Right lobe of liver (tissue), 6 donors: ENCODE measurements at regions of chr15 and their contacts with region 1.

Region 1: GRCh38 chr15:39874890-39875549 is 45.0 kb downstream of the GPR176 start:
- DNase-seq: no peak
- ATAC-seq: peak; percentile 88 to 93 (median 92)
- H3K4me3 ChIP-seq: no peak overlapping the region
- H3K27ac ChIP-seq: no peak overlapping the region
- H3K4me1 ChIP-seq: peaks cover 0 to 10% (median 0%) of the 10 kb centered on the region in 4 donors
- H3K27me3 ChIP-seq: no peaks in the 10 kb centered on the region
- CTCF ChIP-seq: peak; percentile 65 to 80 (median 78)
- POLR2A ChIP-seq: no peak

Region 2: DNA sequence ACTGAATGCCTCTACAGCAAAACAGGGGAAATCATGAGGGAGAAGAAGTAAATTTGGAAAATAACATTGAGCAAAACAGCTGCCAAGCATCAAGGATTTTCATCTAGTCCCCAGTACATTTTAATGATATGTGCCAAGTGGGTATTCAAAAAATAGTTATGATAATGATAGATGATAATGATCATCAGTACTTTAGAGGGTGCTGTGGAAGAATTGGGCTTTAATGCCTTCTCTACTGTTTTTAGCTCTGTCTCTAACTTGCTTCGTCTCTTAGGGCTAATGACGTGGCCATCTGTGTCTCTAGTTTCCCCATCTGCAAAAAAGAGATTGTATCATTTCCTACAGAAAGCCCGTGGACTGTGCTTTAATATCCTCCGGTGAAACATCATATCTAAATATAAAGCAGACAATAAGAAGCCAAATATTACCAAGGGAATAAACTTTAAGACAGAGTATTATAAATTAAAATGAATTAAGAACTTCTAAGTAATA is 82.1 kb before region 1 on chr15:
- intact Hi-C with region 1: loop called (anchors 5 to 10 kb)
- DNase-seq: no peak
- ATAC-seq: no peak
- H3K4me3 ChIP-seq: no peak overlapping the region
- H3K27ac ChIP-seq: no peak overlapping the region
- H3K4me1 ChIP-seq: no peaks in the 10 kb centered on the region
- H3K27me3 ChIP-seq: no peaks in the 10 kb centered on the region
- CTCF ChIP-seq: no peak
- POLR2A ChIP-seq: no peak

Region 3: GRCh38 chr15:39799552-39800011 is 75.4 kb before region 1 on chr15:
- intact Hi-C with region 1: loop called (anchors 5 to 10 kb)
- DNase-seq: no peak
- ATAC-seq: peak in 3 of 4 donors; percentile 17 to 47 (median 19)
- H3K4me3 ChIP-seq: no peak overlapping the region
- H3K27ac ChIP-seq: no peak overlapping the region
- H3K4me1 ChIP-seq: peaks cover 0 to 5% (median 0%) of the 10 kb centered on the region in 4 donors
- H3K27me3 ChIP-seq: no peaks in the 10 kb centered on the region
- CTCF ChIP-seq: no peak
- POLR2A ChIP-seq: no peak